ENCODE measurements at regions of chr19 and their contacts with region 1.

Region 1: DNA sequence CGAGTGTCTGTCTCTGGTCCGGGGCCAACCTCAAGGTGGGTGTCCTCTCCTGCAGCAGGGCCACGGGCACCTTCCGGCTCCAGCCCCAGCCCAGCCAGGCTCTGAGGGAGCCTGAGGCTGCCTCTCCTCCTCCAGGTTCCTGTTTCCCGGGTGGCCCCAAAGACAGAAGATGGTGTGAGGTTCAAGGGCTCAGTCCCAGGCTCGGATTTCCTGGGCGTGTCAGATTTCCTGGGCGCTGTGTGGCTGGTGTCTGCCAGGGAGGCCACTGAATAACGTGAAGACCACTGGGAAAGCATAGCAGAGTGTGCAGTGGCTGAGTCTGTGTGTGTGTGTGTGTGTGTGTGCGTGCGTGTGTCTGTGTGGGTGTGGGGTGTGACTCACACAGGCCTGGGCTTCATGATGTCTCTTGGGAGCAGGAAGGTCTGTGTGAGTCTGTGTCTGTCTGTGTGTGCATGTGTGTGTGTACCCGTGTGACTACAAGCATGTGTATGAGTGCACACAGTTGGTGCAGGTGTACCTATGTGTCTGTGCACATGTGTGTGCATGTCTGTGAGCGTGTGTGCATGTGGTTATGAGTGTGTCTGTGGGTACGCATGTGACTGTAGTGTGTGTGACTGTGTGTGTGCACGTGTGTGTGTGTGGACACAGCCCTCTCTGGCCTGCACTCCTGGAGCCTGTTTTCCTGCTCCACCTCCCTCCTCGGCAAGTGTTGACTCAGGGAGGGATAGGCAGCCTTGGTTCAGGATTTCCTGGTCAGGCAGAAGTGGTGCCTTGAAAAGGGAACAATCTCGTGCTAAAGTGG is 28.3 kb downstream of the CEBPA start:
- DNase-seq: peak; percentile 56
- ATAC-seq: no peak
- H3K4me3 ChIP-seq: no peak overlapping the region; a peak in 1 of 6 replicates
- H3K27ac ChIP-seq: peak overlapping the region; percentile 94
- H3K4me1 ChIP-seq: peaks cover 85% of the 10 kb centered on the region
- H3K27me3 ChIP-seq: no peaks in the 10 kb centered on the region
- CTCF ChIP-seq: 0 out of 2 replicates have a peak, but pooled peaks have one; percentile 11
- EP300 ChIP-seq: peak in 1 of 2 experiments; percentile 34; a peak in 1 of 4 replicates
- POLR2A ChIP-seq: no peak; a peak in 1 of 4 replicates
- RAD21 ChIP-seq: no peak

Region 2: DNA sequence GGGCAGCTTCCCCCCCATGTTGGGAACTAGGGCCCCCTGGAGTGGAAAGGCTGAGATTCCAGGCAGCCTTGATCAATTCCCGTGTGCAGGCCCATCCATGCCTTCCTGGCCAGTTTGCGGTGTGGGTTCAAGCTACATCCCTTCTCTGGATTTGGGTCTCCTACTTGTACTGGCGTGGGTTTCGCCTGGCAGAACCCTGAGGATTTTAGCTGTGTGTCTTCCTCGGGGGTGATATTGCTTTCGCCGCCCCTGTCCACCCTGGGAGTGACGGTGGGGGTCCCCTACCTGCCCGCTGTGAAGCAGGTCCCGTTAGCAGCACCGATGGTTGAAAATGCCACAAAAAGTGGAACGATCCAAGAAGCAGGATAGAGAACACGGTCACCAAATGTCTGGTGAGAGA is 415.9 kb before region 1 on chr19:
- CTCF ChIA-PET with region 1: no interaction called
- POLR2A ChIA-PET with region 1: no interaction called
- in situ Hi-C with region 1: no loop called
- intact Hi-C with region 1: no loop called
- DNase-seq: no peak
- ATAC-seq: no peak
- H3K4me3 ChIP-seq: no peak overlapping the region
- H3K27ac ChIP-seq: no peak overlapping the region
- H3K4me1 ChIP-seq: no peaks in the 10 kb centered on the region
- H3K27me3 ChIP-seq: no peaks in the 10 kb centered on the region
- CTCF ChIP-seq: no peak
- EP300 ChIP-seq: no peak
- POLR2A ChIP-seq: no peak
- RAD21 ChIP-seq: no peak

Region 3: DNA sequence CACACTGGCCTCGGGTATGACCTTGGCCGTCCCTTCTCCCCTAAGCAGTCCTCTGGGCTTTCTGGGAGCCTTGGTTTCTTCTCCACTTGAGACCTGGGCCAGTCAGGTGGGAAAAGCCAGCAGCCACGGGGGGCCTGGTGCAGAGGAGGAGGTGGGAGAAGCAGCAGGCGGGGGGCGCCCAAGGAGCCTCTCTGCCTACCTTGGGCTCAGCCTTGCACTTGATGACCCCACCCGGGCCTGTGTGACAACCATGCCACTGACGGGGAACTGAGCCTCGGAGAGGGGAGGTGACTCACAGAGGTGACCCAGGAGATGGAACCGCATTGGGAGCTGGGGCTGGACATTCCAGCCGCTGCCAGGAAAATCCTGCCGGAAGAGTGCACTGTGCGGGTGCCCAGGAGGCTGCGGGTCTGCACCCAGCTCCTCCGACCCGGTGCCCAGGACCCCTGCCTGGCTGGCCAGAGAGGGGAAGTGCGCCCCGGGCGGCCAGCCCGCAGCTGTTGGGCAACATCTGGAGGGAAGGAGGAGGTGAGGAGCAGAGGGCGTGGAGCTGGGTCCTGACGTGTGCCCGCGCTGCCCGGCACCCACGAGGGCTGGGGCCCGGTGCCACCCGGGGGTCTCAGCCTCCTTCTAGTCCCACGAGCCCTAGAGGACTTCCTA is 25.0 kb before region 1 on chr19:
- CTCF ChIA-PET with region 1: no interaction called
- POLR2A ChIA-PET with region 1: interaction called, 15 read pairs
- in situ Hi-C with region 1: no loop called
- intact Hi-C with region 1: loop called (anchors 1 kb)
- DNase-seq: peak; percentile 53
- ATAC-seq: peak; percentile 59
- H3K4me3 ChIP-seq: peak overlapping the region; percentile 25 to 69 (median 27); a peak in 5 of 6 replicates
- H3K27ac ChIP-seq: peak overlapping the region; percentile 83
- H3K4me1 ChIP-seq: peaks cover 62% of the 10 kb centered on the region
- H3K27me3 ChIP-seq: peaks cover 3 to 4% of the 10 kb centered on the region in 2 experiments; a peak in 3 of 5 replicates
- CTCF ChIP-seq: peak; percentile 69
- EP300 ChIP-seq: no peak
- POLR2A ChIP-seq: no peak
- RAD21 ChIP-seq: peak; percentile 36; the same call in 1 of the 2 replicates

Region 4: GRCh38 chr19:33286899-33287298 is 12.8 kb after region 1 on chr19:
- CTCF ChIA-PET with region 1: no interaction called
- POLR2A ChIA-PET with region 1: interaction called, 380 read pairs
- in situ Hi-C with region 1: no loop called
- intact Hi-C with region 1: loop called (anchors 2 kb)
- DNase-seq: no peak
- ATAC-seq: no peak
- H3K4me3 ChIP-seq: no peak overlapping the region
- H3K27ac ChIP-seq: no peak overlapping the region
- H3K4me1 ChIP-seq: peaks cover 71% of the 10 kb centered on the region
- H3K27me3 ChIP-seq: no peaks in the 10 kb centered on the region
- CTCF ChIP-seq: no peak
- EP300 ChIP-seq: no peak
- POLR2A ChIP-seq: no peak
- RAD21 ChIP-seq: no peak

Measured in HepG2 (cell line).